ENCODE measurements at regions of chr7 and their contacts with region 1.

Region 1: GRCh38 chr7:152463709-152464311 is 28.0 kb upstream of the KMT2C start:
- DNase-seq: peak; percentile 100
- H3K4me3 ChIP-seq: peak overlapping the region; percentile 64
- H3K4me3 Mint-ChIP-seq: peak overlapping the region; percentile 88 to 99 (median 92)
- H3K27ac ChIP-seq: peak overlapping the region; percentile 95
- H3K27ac Mint-ChIP-seq: peak overlapping the region in 7 of 8 donors; percentile 47 to 98 (median 92)
- H3K4me1 ChIP-seq: peaks cover 10% of the 10 kb centered on the region
- H3K4me1 Mint-ChIP-seq: peaks cover 10 to 12% (median 11%) of the 10 kb centered on the region in 3 donors
- H3K27me3 ChIP-seq: no peaks in the 10 kb centered on the region
- H3K27me3 Mint-ChIP-seq: no peaks in the 10 kb centered on the region

Region 2: GRCh38 chr7:152436111-152436930 is 27.5 kb before region 1 on chr7:
- CTCF ChIA-PET with region 1: interaction called, 7 read pairs
- POLR2A ChIA-PET with region 1: interaction called, 28 read pairs
- DNase-seq: peak; percentile 86 to 93 (median 90)
- H3K4me3 ChIP-seq: peak overlapping the region; percentile 79
- H3K4me3 Mint-ChIP-seq: peak overlapping the region; percentile 83 to 98 (median 88)
- H3K27ac ChIP-seq: peak overlapping the region; percentile 93
- H3K27ac Mint-ChIP-seq: peak overlapping the region; percentile 88 to 99 (median 95)
- H3K4me1 ChIP-seq: peaks cover 23% of the 10 kb centered on the region
- H3K4me1 Mint-ChIP-seq: peaks cover 27 to 34% (median 33%) of the 10 kb centered on the region in 3 donors
- H3K27me3 ChIP-seq: no peaks in the 10 kb centered on the region
- H3K27me3 Mint-ChIP-seq: peaks cover 0 to 9% of the 10 kb centered on the region in 2 donors